ENCODE measurements at regions of chr2 and their contacts with region 1.

Region 1: DNA sequence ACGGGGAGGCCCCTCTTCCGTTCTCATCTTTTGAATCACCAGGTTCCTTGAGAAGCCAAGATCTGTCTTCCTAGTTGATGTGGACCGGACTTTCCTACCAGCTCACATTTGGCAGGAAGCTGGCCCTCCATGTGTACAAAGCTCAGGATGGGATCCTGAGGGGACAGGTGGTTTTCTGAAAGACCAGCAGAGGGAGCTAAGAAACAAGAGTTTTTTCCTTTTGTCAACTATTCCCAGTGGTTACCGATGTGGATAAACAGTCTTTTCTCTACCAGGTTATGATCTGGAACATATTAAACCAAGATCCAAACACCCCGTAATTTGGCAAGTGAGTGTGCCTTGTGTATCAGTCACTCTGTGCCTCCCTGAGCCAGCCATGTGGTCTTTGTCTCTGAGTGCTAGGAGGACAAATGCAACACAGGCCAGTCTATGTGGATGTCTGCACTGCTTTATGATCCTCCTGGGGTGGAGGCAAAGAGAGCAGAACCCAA is 25.1 kb upstream of the ARHGAP25 start:
- DNase-seq: peak in 7 of 9 donors; percentile 14 to 41 (median 37)
- ATAC-seq: peak; percentile 66
- H3K4me3 ChIP-seq: no peak overlapping the region
- H3K4me3 Mint-ChIP-seq: peak overlapping the region in 5 of 10 donors; percentile 10 to 75 (median 55)
- H3K27ac ChIP-seq: no peak overlapping the region
- H3K27ac Mint-ChIP-seq: peak overlapping the region in 6 of 9 donors; percentile 22 to 74 (median 42)
- H3K4me1 ChIP-seq: peaks cover under 1 to 3% of the 10 kb centered on the region in 2 donors
- H3K4me1 Mint-ChIP-seq: peaks cover 5 to 32% (median 26%) of the 10 kb centered on the region in 7 donors
- H3K27me3 ChIP-seq: no peaks in the 10 kb centered on the region
- H3K27me3 Mint-ChIP-seq: peaks cover 0 to 16% (median 0%) of the 10 kb centered on the region in 5 donors

Region 2: GRCh38 chr2:68471385-68471784 is 238.1 kb before region 1 on chr2:
- CTCF ChIA-PET with region 1: no interaction called
- POLR2A ChIA-PET with region 1: no interaction called
- intact Hi-C with region 1: no loop called
- DNase-seq: no peak
- ATAC-seq: no peak
- H3K4me3 ChIP-seq: no peak overlapping the region
- H3K4me3 Mint-ChIP-seq: no peak overlapping the region
- H3K27ac ChIP-seq: no peak overlapping the region
- H3K27ac Mint-ChIP-seq: peak overlapping the region in 1 of 9 donors; percentile 54
- H3K4me1 ChIP-seq: no peaks in the 10 kb centered on the region
- H3K4me1 Mint-ChIP-seq: peaks cover 6 to 24% (median 18%) of the 10 kb centered on the region in 7 donors
- H3K27me3 ChIP-seq: no peaks in the 10 kb centered on the region
- H3K27me3 Mint-ChIP-seq: no peaks in the 10 kb centered on the region

Region 3: DNA sequence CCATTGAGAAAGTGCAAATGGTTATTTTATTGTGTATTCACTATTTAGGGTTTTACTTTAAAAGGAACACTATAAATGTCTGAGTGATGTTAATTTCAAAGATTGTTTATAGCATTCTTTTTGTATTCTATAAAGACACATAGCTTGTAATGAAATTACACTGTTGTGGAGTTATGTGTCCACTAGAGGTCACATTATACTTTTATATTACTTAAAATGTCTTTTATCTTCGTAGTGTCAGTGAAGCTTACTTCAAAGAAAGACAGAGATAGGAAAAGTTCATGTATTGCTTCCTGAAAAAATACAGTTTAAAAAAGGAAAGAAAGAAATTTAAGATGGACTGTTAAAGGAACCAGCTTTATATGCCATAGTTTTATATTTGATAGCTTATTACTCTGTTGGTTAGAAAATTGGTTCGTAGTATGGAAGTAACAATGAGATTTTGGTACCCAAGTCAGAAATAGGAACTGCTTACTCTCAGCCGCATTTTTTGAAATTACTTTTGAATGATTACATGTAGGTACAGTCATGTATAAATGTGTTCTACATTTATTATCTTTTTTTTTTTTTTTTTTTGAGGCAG is 221.6 kb before region 1 on chr2:
- CTCF ChIA-PET with region 1: interaction called, 10 read pairs
- POLR2A ChIA-PET with region 1: no interaction called
- intact Hi-C with region 1: no loop called
- DNase-seq: peak in 4 of 9 donors; percentile 22 to 38 (median 28)
- ATAC-seq: peak; percentile 72
- H3K4me3 ChIP-seq: no peak overlapping the region
- H3K4me3 Mint-ChIP-seq: no peak overlapping the region
- H3K27ac ChIP-seq: no peak overlapping the region
- H3K27ac Mint-ChIP-seq: no peak overlapping the region
- H3K4me1 ChIP-seq: no peaks in the 10 kb centered on the region
- H3K4me1 Mint-ChIP-seq: peaks cover 0 to 5% (median 2%) of the 10 kb centered on the region in 7 donors
- H3K27me3 ChIP-seq: no peaks in the 10 kb centered on the region
- H3K27me3 Mint-ChIP-seq: no peaks in the 10 kb centered on the region

Region 4: GRCh38 chr2:68734688-68735525 is 25.4 kb after region 1 on chr2 and contains the start of gene ARHGAP25:
- CTCF ChIA-PET with region 1: interaction called, 23 read pairs
- POLR2A ChIA-PET with region 1: interaction called, 6 read pairs
- intact Hi-C with region 1: loop called (anchors 1 kb)
- DNase-seq: peak; percentile 20 to 81 (median 69)
- ATAC-seq: peak; percentile 78
- H3K4me3 ChIP-seq: peak within 1 kb of the TSS; percentile 77
- H3K4me3 Mint-ChIP-seq: no peak within 1 kb of the TSS
- H3K27ac ChIP-seq: peak within 1 kb of the TSS; percentile 78
- H3K27ac Mint-ChIP-seq: no peak within 1 kb of the TSS
- H3K4me1 ChIP-seq: peaks cover 38 to 48% of the 10 kb centered on the region in 2 donors
- H3K4me1 Mint-ChIP-seq: peaks cover 23 to 37% (median 32%) of the 10 kb centered on the region in 7 donors
- H3K27me3 ChIP-seq: no peaks in the 10 kb centered on the region
- H3K27me3 Mint-ChIP-seq: no peaks in the 10 kb centered on the region
- total RNA-seq, gene ARHGAP25: 68.2 to 139 (median 116) TPM

Region 5: DNA sequence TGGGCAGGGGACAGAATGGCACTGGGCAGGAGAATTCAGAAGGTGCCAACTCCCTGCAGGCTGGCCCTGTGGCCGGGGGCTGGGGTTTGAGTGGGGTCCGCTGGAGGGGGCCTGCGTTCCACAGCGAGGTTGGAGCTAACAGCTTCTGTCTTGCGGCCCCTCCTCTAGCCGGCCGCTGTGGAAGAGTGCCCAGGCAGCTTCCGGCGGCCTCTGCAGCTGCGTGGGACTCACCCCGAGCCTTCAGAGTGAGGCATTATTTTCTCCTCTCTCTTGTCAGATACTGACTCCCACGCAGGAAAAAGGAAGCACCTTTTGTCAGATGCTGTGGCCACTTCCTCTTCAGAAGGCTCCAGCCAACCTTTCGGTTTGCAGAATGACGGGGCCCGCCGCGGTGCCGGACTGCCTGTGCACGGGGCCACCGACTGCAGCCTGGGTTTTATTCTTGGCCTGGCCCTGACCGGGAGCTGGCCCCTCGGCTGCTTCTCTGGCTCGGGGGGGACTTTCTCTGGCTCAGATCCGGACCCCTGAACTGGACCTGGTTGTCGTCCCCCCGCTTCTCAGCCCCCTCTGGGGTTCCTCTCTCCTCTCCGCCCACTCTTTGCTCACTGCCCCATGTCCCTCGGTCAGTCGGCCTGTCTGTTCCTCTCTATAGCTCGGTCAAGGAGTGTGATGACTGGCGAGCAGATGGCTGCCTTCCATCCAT is 65.3 kb after region 1 on chr2:
- CTCF ChIA-PET with region 1: interaction called, 3 read pairs
- POLR2A ChIA-PET with region 1: interaction called, 3 read pairs
- intact Hi-C with region 1: loop called in 1 of 2 experiments (anchors 2 kb)
- DNase-seq: peak in 7 of 9 donors; percentile 33 to 71 (median 45)
- ATAC-seq: peak; percentile 81
- H3K4me3 ChIP-seq: peak overlapping the region; percentile 69
- H3K4me3 Mint-ChIP-seq: peak overlapping the region; percentile 76 to 94 (median 84)
- H3K27ac ChIP-seq: peak overlapping the region; percentile 82
- H3K27ac Mint-ChIP-seq: peak overlapping the region in 8 of 9 donors; percentile 87 to 99 (median 98)
- H3K4me1 ChIP-seq: peaks cover 86 to 87% of the 10 kb centered on the region in 2 donors
- H3K4me1 Mint-ChIP-seq: peaks cover 84 to 96% (median 90%) of the 10 kb centered on the region in 7 donors
- H3K27me3 ChIP-seq: no peaks in the 10 kb centered on the region
- H3K27me3 Mint-ChIP-seq: no peaks in the 10 kb centered on the region

Region 6: GRCh38 chr2:68925295-68925896 is 215.9 kb after region 1 on chr2:
- CTCF ChIA-PET with region 1: interaction called, 47 read pairs
- POLR2A ChIA-PET with region 1: interaction called, 4 read pairs
- intact Hi-C with region 1: loop called (anchors 1 kb)
- DNase-seq: peak in 7 of 9 donors; percentile 40 to 70 (median 63)
- ATAC-seq: peak; percentile 84
- H3K4me3 ChIP-seq: no peak overlapping the region
- H3K4me3 Mint-ChIP-seq: no peak overlapping the region
- H3K27ac ChIP-seq: no peak overlapping the region
- H3K27ac Mint-ChIP-seq: peak overlapping the region in 2 of 9 donors; percentile 48 to 53
- H3K4me1 ChIP-seq: no peaks in the 10 kb centered on the region
- H3K4me1 Mint-ChIP-seq: peaks cover 0 to 8% (median 0%) of the 10 kb centered on the region in 7 donors
- H3K27me3 ChIP-seq: no peaks in the 10 kb centered on the region
- H3K27me3 Mint-ChIP-seq: peaks cover 0 to 31% (median 4%) of the 10 kb centered on the region in 5 donors

Region 7: GRCh38 chr2:69061525-69061924 is 352.1 kb after region 1 on chr2:
- CTCF ChIA-PET with region 1: no interaction called
- POLR2A ChIA-PET with region 1: no interaction called
- intact Hi-C with region 1: no loop called
- DNase-seq: no peak
- ATAC-seq: no peak
- H3K4me3 ChIP-seq: no peak overlapping the region
- H3K4me3 Mint-ChIP-seq: no peak overlapping the region
- H3K27ac ChIP-seq: no peak overlapping the region
- H3K27ac Mint-ChIP-seq: no peak overlapping the region
- H3K4me1 ChIP-seq: no peaks in the 10 kb centered on the region
- H3K4me1 Mint-ChIP-seq: no peaks in the 10 kb centered on the region
- H3K27me3 ChIP-seq: no peaks in the 10 kb centered on the region
- H3K27me3 Mint-ChIP-seq: peaks cover 46 to 69% (median 60%) of the 10 kb centered on the region in 5 donors